A549 (cell line): ENCODE measurements at regions of chr3 and their contacts with region 1.

Region 1: DNA sequence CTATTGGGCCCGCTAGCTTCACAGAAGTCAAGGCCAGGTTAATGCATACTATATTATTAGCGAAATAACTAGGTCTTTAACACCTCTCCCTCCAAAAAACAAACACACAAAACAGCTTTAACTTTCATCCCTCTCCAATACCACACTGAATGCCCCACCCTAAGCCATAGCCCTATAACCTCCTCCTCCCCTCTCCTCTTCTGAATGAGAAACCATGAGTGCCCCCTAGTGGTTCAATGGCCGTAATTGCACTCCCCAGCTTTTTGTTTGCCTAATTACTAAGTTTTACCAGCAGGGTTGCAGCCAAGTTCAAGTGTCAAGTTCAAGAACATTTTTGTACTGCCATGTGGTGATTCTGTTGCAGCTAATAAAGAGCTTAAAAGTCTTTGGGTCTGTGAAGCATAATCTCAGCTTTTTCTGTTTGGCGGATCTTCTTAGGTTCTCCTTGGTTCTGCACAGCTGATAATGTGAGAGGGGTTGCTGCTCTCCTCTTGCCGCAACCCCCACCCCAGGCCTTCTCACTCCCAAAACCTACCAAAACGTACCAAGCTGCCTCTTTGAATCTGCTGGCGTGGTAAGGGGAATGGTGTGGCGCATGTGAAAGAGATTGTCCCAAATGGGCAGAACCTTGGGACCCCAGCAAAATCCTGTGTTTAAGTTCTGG is 57.9 kb downstream of the RPL22L1 start:
- DNase-seq: peak; percentile 67 to 70
- ATAC-seq: peak; percentile 75 to 86
- H3K4me3 ChIP-seq: no peak overlapping the region
- H3K27ac ChIP-seq: no peak overlapping the region
- H3K4me1 ChIP-seq: peaks cover 6% of the 10 kb centered on the region
- CTCF ChIP-seq: peak; percentile 79
- EP300 ChIP-seq: no peak
- POLR2A ChIP-seq: no peak
- RAD21 ChIP-seq: peak; percentile 88 to 90

Region 2: DNA sequence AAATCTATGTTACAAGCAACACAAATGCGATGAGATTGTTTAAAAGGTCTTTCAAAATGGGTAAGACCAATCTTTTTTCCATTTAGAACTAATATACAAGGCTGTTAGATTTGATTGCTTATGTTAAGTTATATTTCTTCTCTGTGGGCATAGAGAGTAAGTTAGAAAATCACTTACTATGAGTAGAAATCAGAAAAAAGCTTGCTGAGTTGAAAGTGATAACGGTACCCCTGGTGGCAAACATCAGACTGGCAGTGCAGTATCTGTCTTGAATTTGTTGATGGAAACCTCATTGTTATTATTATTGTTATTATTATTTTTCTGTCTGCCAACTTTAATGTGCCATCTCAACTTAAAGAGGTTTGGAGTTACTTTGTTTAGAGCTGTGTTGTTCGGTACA is 381.0 kb before region 1 on chr3:
- CTCF ChIA-PET with region 1: interaction called, 10 read pairs
- POLR2A ChIA-PET with region 1: no interaction called
- DNase-seq: no peak
- ATAC-seq: no peak
- H3K4me3 ChIP-seq: no peak overlapping the region
- H3K27ac ChIP-seq: no peak overlapping the region
- H3K4me1 ChIP-seq: no peaks in the 10 kb centered on the region
- CTCF ChIP-seq: no peak
- EP300 ChIP-seq: no peak
- POLR2A ChIP-seq: no peak
- RAD21 ChIP-seq: no peak

Region 3: GRCh38 chr3:170563712-170564423 is 248.2 kb before region 1 on chr3:
- CTCF ChIA-PET with region 1: interaction called, 12 read pairs
- POLR2A ChIA-PET with region 1: no interaction called
- DNase-seq: no peak
- ATAC-seq: no peak
- H3K4me3 ChIP-seq: no peak overlapping the region
- H3K27ac ChIP-seq: no peak overlapping the region
- H3K4me1 ChIP-seq: no peaks in the 10 kb centered on the region
- CTCF ChIP-seq: no peak
- EP300 ChIP-seq: no peak
- POLR2A ChIP-seq: no peak
- RAD21 ChIP-seq: no peak

Region 4: GRCh38 chr3:170740726-170741591 is 71.1 kb before region 1 on chr3:
- CTCF ChIA-PET with region 1: interaction called, 10 read pairs
- POLR2A ChIA-PET with region 1: no interaction called
- DNase-seq: peak; percentile 28 to 50
- ATAC-seq: peak; percentile 82 to 86
- H3K4me3 ChIP-seq: no peak overlapping the region
- H3K27ac ChIP-seq: peak overlapping the region in 1 of 2 experiments; percentile 33; a peak in 3 of 6 replicates
- H3K4me1 ChIP-seq: peaks cover 33% of the 10 kb centered on the region
- CTCF ChIP-seq: no peak
- EP300 ChIP-seq: no peak
- POLR2A ChIP-seq: no peak
- RAD21 ChIP-seq: no peak

Region 5: DNA sequence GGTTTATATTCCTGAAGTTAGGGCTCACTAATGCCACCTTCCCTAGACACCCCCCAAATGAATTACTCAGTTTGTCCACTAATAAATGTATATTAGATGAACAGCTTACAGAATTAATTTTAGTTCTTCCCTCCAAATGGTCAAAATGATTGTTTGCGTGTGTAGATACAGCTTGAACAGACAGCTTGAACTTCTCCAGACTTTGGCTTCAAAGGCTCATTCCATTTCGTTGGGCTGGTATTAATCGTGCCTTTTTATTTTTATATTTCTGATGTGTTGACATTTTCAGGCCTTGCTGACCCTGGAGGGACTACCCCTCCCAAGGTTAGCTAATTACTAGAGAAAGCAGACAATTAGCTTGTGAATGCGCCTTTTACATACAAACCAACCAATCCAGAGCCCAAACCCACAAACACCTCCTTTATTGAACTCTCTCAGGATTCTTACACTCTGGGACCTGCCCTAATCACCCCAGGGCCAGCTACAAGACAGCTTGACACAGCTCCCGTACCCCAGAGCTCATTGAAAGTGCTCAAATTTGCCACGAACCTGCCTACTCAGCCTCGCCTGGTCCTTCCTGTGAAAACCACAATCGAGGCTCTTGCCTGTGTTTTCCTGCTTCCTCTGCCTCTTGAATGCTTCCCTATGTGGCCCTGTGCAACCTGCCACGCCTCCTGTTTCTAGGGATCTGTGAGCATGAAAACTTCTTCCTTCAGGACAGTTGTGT is 17.6 kb after region 1 on chr3:
- CTCF ChIA-PET with region 1: interaction called, 18 read pairs
- POLR2A ChIA-PET with region 1: no interaction called
- DNase-seq: no peak
- ATAC-seq: no peak
- H3K4me3 ChIP-seq: no peak overlapping the region
- H3K27ac ChIP-seq: no peak overlapping the region
- H3K4me1 ChIP-seq: no peaks in the 10 kb centered on the region
- CTCF ChIP-seq: no peak
- EP300 ChIP-seq: no peak
- POLR2A ChIP-seq: no peak
- RAD21 ChIP-seq: no peak

Region 6: DNA sequence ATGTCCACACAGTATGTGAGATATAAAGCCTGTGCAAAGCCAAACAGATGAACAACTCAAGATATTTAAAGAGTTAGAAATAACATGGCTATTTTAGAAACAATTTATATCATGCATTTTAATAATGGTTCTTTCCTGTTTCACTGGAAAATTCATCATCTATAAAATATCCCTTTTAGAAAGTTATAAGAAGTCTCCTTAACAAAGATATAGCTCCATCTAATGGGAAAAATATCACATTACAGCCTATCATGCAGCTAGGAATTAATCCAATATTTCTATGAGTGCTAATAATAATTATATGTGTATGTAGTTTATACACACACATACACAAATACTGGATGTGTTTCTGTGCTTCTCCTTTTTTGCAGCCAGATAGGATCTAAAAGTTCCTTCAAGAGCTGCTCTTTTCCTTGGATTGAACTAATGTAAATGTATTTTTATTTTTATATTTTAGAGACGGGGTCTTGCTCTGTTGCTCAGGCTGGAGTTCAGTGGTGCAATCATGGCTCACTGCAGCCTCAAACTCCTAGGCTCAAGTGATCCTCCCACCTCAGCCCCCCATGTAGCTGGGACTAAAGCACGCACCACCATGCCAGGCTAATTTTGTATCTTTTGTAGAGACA is 36.3 kb after region 1 on chr3:
- CTCF ChIA-PET with region 1: interaction called, 27 read pairs
- POLR2A ChIA-PET with region 1: no interaction called
- DNase-seq: no peak
- ATAC-seq: peak in 1 of 2 experiments; percentile 50; a peak in 2 of 6 replicates
- H3K4me3 ChIP-seq: no peak overlapping the region
- H3K27ac ChIP-seq: no peak overlapping the region
- H3K4me1 ChIP-seq: no peaks in the 10 kb centered on the region
- CTCF ChIP-seq: peak; percentile 42
- EP300 ChIP-seq: no peak
- POLR2A ChIP-seq: no peak
- RAD21 ChIP-seq: peak; percentile 46 to 55; a peak in 4 of 5 replicates

Region 7: DNA sequence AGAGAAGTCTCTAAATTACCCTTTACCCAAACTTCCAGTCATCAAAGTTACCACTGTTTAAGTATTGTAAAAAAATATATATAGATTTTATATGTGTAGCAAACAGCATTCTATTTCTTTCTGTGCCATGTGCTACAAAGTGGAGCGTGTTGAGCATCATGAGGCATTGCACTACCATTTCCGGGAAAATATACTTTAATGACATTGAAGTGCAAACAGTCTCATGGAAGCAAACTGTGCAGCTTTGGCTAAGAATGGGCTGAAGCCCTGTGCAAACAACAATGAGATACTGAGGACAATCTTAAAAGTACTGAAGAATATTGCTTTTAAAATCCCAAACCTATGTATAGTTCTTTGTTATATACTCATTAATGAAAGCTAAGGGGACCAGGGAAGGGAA is 64.5 kb after region 1 on chr3:
- CTCF ChIA-PET with region 1: no interaction called
- POLR2A ChIA-PET with region 1: no interaction called
- DNase-seq: no peak
- ATAC-seq: no peak
- H3K4me3 ChIP-seq: no peak overlapping the region
- H3K27ac ChIP-seq: no peak overlapping the region
- H3K4me1 ChIP-seq: no peaks in the 10 kb centered on the region
- CTCF ChIP-seq: no peak
- EP300 ChIP-seq: no peak
- POLR2A ChIP-seq: no peak
- RAD21 ChIP-seq: no peak

Region 8: DNA sequence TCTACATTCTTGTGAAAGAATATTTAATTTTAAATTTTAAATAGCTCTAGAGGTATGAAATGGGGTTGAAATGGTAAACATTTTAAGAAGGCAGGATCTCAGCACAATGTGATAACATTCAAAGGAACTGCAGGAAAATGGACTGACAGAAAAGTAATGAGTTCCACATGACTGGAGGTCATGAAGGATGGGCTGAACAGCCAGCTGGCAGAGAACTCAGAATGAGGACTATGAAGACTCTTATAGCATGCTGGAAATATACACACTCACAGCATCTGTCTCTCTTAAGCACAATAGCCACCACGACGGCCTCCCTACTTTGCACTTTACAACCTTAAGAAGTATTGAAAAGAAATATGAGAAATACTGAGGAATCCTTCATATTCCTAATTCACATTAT is 553.4 kb after region 1 on chr3:
- CTCF ChIA-PET with region 1: no interaction called
- POLR2A ChIA-PET with region 1: no interaction called
- DNase-seq: no peak
- ATAC-seq: no peak
- H3K4me3 ChIP-seq: no peak overlapping the region
- H3K27ac ChIP-seq: no peak overlapping the region
- H3K4me1 ChIP-seq: 0 out of 3 replicates have a peak, but pooled peaks cover 3% of the 10 kb centered on the region
- CTCF ChIP-seq: no peak
- EP300 ChIP-seq: no peak
- POLR2A ChIP-seq: no peak
- RAD21 ChIP-seq: no peak